ENCODE measurements at regions of chr2 and their contacts with region 1.

Region 1: GRCh38 chr2:26001743-26002351 is 19.6 kb upstream of the KIF3C start:
- DNase-seq: peak; percentile 55
- H3K4me3 ChIP-seq: no peak overlapping the region
- H3K27ac ChIP-seq: no peak overlapping the region
- H3K4me1 ChIP-seq: peaks cover 21% of the 10 kb centered on the region
- H3K27me3 ChIP-seq: no peaks in the 10 kb centered on the region
- CTCF ChIP-seq: no peak
- POLR2A ChIP-seq: no peak

Region 2: GRCh38 chr2:25899404-25899970 is 102.4 kb before region 1 on chr2:
- CTCF ChIA-PET with region 1: no interaction called
- POLR2A ChIA-PET with region 1: no interaction called
- dilution Hi-C with region 1: no loop called
- intact Hi-C with region 1: no loop called
- DNase-seq: no peak
- H3K4me3 ChIP-seq: no peak overlapping the region
- H3K27ac ChIP-seq: no peak overlapping the region
- H3K4me1 ChIP-seq: no peaks in the 10 kb centered on the region
- H3K27me3 ChIP-seq: peaks cover 0 to 2% of the 10 kb centered on the region in 2 experiments
- CTCF ChIP-seq: no peak
- POLR2A ChIP-seq: no peak

Region 3: DNA sequence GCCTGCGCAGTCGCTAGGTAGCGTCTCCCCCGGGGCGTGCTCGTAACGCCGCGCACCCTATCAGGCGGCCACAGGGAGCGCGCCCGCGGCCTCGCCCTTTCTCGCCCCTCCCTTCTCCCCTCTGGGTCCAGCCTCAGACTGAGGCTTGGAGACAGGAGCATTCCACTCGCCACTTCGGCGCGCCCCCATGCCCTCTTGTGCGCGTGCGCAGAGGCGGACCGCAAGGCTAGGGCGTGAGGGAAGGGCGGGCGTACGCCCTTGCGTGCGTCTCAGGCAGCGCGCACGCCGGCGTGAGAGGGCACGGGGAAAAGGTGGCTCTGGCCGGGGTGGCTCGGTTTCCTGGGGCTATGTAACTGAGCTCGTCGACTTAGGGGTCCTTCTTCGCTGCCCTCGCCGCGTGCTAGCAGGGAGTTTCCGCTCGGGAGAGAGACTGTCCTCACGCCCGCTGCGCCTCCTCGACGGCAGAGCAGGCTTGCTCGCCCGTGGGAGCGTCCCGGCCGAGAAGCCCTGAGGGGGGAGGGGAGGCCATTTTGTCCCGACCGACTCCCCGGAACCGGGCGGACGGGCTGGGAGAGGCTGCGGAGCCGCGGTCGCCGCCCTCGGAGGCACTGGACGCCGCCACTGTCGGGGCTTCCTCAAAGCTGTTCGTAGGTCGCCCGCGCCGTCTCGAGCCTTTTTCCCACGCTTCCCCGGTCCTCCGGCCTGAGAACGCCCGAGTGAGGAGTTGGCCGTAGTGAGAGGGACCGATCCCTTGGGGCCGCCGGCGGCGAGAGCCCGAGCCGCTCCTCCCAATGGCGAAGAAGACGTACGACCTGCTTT is 32.2 kb after region 1 on chr2 and contains the start of gene RAB10:
- CTCF ChIA-PET with region 1: interaction called, 13 read pairs
- POLR2A ChIA-PET with region 1: interaction called, 3 read pairs
- dilution Hi-C with region 1: no loop called
- intact Hi-C with region 1: loop called (anchors 2 kb)
- DNase-seq: peak; percentile 100
- H3K4me3 ChIP-seq: peak within 1 kb of the TSS; percentile 90 to 97 (median 92)
- H3K27ac ChIP-seq: peak within 1 kb of the TSS; percentile 72
- H3K4me1 ChIP-seq: peaks cover 11% of the 10 kb centered on the region
- H3K27me3 ChIP-seq: no peaks in the 10 kb centered on the region
- CTCF ChIP-seq: no peak
- POLR2A ChIP-seq: peak; percentile 94
- total RNA-seq, gene RAB10: 104 and 105 TPM in 2 replicates

Measured in endothelial cell of umbilical vein (primary cell).